BJ (cell line): ENCODE measurements at regions of chr19 and their contacts with region 1.

Region 1: DNA sequence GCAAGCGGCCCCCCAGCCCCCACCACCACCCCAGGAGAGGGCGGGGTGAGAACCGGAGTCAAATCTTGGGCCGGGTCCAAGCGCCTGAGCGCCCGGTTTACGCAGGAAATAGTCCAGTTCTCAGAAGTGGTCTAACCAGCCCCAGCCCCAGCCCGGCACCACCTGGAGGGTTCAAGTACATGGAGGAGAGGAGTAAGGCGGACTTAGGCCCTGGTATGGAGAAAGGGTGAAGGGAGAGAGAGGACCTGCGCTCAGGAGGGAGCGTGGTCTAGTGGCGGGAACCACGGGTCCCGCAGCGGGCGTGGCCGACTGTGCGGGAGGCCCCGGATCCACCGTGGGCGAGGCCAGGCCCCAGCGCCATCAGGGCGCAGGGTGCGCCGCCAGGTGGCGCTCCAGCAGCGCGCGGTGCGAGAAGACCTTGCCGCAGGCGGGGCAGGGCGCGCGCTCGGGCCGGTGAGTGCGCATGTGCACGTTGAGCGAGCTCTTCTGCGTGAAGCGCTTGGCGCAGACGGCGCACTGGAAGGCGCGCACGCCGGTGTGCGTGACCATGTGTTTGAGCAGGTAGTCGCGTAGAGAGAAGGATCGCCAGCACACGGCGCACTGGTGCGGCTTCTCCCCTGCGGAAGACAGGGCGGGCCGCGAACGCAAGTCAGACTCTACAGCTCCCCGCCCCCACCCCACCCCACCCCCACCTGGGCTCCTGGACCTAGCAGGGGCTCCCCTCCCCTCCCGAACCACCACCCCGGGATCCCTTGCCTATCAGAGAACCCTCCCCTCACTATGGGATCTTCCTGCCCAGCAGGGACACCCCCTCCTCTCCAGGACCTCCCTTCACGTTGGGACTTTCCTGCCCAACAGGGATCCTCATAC is 2.1 kb upstream of the SLC27A5 start:
- DNase-seq: peak; percentile 26
- H3K4me3 ChIP-seq: peak overlapping the region; percentile 39
- H3K27me3 ChIP-seq: no peaks in the 10 kb centered on the region
- CTCF ChIP-seq: peak; percentile 46

Region 2: GRCh38 chr19:58416604-58417003 is 97.3 kb before region 1 on chr19:
- CTCF ChIA-PET with region 1: no interaction called
- POLR2A ChIA-PET with region 1: no interaction called
- DNase-seq: no peak
- H3K4me3 ChIP-seq: no peak overlapping the region
- H3K27me3 ChIP-seq: no peaks in the 10 kb centered on the region
- CTCF ChIP-seq: no peak

Region 3: DNA sequence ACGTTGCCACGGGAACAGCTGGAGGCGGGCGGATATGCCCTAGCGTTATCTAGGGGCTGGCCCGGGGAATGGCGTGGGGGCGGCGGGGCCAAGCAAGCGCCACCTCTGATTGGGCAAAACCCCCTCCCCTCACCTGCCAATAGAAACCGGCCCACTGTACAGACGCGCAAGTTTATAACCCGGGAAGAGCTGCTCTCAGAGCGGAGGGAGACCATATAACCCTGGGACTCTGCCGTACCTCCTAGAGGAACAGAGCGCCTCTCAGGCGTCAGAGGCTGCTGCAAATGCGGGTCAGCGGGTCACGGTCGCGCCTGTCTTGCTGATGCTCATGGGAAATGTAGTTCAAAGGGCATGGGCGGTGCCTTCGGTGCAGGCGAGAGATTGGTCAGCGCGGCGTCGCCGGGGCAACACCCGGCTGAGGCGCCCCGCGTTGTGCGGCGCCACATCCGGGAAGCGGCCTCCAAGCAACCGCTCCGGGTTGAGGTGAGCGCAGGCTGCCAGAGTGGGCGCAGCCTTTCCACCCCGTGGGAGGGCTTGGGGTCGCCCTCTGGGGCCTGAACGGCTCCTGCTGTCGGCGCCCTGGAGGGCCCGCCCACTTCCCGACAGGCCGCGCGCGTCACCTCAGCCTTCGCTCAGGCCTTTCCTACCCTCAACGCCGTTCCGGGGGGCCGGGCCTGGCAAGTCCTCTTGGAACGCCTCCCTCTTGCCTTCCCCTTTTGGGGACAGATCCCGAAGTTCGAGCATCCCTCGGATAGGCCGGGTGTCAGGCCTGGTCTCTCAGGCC is 38.0 kb before region 1 on chr19 and contains the start of gene ZNF446:
- CTCF ChIA-PET with region 1: no interaction called
- POLR2A ChIA-PET with region 1: no interaction called
- DNase-seq: peak; percentile 84
- H3K4me3 ChIP-seq: peak within 1 kb of the TSS; percentile 62
- H3K27me3 ChIP-seq: no peaks in the 10 kb centered on the region
- CTCF ChIP-seq: no peak
- polyA plus RNA-seq, gene ZNF446: 5.0 and 8.2 TPM in 2 replicates

Region 4: DNA sequence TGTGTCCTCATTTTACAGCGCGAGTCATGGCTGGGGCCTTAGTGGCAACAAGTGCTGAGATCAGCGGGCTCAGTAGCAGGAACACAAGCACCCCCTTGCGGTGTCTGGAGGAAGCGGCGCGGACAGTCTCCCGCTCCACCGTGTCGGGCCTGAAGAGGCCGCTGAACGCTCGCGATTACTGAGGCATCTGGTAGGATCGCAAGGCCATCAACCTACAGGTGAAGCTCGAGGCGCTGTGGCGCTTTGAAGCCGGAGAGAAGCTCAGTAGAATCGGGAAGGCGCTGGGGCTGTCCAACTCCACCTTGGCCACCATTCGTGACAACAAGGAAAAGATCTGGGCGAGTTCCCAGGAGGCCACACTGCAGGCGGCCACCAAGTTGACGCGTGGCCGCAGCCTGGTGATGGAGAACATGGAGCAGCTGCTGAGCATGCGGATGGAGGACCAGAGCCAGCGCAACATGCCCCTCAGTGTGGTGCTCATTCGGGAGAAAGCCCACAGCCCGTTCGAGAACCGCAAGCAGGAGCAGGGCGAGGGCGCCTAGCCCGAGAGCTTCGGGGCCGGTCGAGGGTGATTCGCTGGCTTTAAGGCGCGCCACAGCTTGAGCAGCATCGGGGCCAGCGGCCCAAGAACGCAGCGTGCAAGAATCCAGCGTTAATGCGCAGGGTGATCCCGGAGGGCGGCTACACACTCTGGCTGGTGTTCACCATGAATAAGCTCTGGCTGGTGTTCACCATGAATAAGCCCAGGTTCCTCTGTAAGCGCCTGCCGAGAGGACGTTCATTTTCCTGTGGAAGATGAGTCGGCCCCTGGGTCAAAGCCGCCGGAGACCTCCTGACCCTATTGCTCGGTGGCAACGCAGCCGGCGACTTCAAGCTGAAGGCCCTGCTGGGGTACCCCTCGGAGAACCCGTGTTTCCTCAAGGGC is 67.6 kb after region 1 on chr19:
- CTCF ChIA-PET with region 1: interaction called, 66 read pairs
- POLR2A ChIA-PET with region 1: no interaction called
- DNase-seq: peak; percentile 63
- H3K4me3 ChIP-seq: no peak overlapping the region
- H3K27me3 ChIP-seq: no peaks in the 10 kb centered on the region
- CTCF ChIP-seq: peak; percentile 99